SK-N-SH (cell line): ENCODE measurements at regions of chr19 and their contacts with region 1.

Region 1: DNA sequence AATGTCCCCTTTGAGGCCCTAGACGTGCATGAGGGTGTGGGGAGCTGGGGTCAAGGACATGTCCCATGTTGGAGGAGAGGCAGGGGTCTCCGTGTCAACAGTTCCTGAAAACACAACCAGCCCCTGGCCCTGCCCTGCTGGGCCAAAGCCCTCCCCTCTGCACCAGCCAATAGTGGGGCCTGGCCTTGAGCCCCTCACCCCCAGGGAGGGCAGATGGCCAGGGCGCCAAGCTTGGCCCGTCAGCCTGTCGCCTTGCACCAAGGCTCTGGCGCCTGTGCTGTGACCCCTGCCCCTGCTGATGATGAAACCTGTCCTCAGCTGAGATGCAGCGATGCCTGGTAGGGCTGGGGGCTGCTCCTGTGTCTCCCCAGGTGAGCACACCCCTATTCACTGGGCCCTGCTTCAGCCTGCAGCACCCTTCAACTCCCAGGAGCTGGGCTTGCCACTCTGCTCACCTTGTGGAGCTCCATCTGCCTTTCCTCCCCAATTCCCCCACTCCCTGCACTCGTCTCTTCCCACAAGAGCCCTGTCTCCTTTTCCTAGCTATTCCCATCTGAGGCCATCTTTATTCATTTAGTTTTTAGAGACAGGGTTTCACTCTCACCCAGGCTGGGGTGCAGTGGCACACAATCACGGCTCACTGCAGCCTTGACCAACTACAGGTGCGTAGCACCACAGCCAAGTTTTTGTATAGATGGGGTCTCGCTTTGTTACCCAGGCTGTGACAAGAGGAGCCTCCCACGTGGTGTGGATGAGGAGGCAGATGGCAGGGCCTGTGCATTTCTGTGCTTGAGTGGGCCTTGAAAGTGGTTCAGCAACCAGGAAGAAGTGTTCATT is 2.1 kb upstream of the HAMP start:
- DNase-seq: no peak
- H3K4me3 ChIP-seq: no peak overlapping the region
- H3K27ac ChIP-seq: no peak overlapping the region
- H3K4me1 ChIP-seq: no peaks in the 10 kb centered on the region
- H3K27me3 ChIP-seq: peaks cover 31% of the 10 kb centered on the region
- CTCF ChIP-seq: no peak
- EP300 ChIP-seq: no peak
- RAD21 ChIP-seq: no peak

Region 2: GRCh38 chr19:35269421-35270117 is 10.6 kb before region 1 on chr19:
- CTCF ChIA-PET with region 1: interaction called, 38 read pairs
- POLR2A ChIA-PET with region 1: interaction called, 3 read pairs
- DNase-seq: peak; percentile 89
- H3K4me3 ChIP-seq: peak overlapping the region; percentile 61 to 87; a peak in 3 of 4 replicates
- H3K27ac ChIP-seq: peak overlapping the region in 1 of 2 experiments; percentile 92; a peak in 2 of 4 replicates
- H3K4me1 ChIP-seq: peaks cover 4 to 15% of the 10 kb centered on the region in 2 experiments; a peak in 1 of 4 replicates
- H3K27me3 ChIP-seq: no peaks in the 10 kb centered on the region
- CTCF ChIP-seq: peak; percentile 45; the same call in 1 of the 2 replicates
- EP300 ChIP-seq: no peak
- RAD21 ChIP-seq: peak; percentile 50

Region 3: DNA sequence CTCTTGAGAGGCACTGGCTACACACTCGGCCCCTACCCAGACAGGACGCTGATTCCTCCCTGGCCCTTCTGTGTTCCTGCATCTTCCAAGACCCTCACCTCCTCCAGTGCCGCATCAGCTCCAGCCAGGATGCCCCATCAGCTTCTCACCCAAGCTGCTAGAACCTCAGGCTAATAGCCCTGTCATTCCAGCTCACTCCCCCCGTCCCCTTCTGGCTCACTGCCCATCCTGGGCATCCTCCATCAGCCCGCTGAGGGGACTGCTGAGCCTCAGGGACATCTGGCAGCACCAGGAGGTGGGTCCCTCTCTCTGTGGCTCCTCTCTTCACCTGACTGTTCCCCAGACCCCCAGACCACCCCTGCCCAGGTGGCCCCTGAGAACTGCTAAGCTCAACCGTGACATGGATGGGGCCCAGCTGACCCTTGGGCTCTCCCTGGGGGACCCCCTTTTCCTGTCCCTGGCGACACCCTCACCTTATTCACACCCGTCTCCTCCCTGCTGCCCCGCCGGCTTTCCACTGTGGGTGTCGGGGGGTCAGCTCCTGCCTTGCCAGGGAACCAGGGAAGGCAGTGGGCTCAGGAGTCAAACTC is 82.9 kb after region 1 on chr19:
- CTCF ChIA-PET with region 1: no interaction called
- POLR2A ChIA-PET with region 1: no interaction called
- DNase-seq: no peak
- H3K4me3 ChIP-seq: no peak overlapping the region
- H3K27ac ChIP-seq: no peak overlapping the region
- H3K4me1 ChIP-seq: peaks cover 0 to 3% of the 10 kb centered on the region in 2 experiments; a peak in 1 of 4 replicates
- H3K27me3 ChIP-seq: peaks cover 55% of the 10 kb centered on the region
- CTCF ChIP-seq: no peak
- EP300 ChIP-seq: no peak
- RAD21 ChIP-seq: no peak

Region 4: DNA sequence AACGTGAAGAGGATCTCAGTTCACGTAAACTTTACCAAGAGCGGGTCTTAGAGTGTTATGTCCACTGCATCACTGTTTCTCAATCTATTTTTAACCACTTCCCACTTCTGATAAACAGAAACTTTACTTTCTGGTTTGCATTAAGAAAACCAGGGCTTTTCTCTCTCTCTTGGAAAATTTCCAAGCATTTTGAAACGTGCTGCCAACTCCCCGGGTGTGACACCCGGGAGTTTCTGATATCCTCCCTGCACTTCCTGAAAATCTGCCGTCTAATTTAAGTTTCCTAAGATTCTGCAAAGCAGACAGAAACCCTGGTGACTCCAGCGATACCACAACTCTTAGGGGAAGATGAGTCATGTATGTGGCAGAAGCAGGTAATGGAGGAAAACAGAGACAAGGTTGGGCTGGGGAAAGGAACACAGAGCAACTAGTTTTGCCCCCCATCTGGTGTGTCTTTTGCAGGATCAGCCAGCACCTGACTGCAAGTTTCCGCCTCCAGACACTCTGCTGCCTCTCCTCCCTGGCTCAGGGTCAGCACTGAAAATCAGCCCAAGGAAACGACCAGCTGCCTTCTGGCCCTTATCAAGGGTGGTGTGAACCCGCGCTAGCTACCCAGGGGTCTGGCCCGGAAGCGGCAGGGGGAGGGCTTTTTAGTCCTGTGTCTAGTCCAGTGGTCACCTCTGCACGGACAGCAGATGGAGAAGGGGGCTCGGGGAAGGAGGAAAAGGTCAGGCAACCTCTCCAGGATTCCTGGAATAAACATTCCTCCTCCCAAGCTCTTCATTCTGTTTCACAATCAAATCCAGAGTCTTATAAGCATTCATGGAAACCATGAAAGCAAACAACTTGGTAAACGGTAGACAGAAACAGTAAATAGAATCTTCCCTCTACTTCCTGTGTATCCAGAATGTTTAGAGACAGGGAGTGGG is 156.5 kb after region 1 on chr19:
- CTCF ChIA-PET with region 1: no interaction called
- POLR2A ChIA-PET with region 1: no interaction called
- DNase-seq: no peak
- H3K4me3 ChIP-seq: no peak overlapping the region
- H3K27ac ChIP-seq: no peak overlapping the region
- H3K4me1 ChIP-seq: peaks cover 4 to 9% of the 10 kb centered on the region in 2 experiments; a peak in 1 of 4 replicates
- H3K27me3 ChIP-seq: peaks cover 71% of the 10 kb centered on the region
- CTCF ChIP-seq: no peak
- EP300 ChIP-seq: no peak
- RAD21 ChIP-seq: no peak